ENCODE measurements at regions of chr11 and their contacts with region 1.

Region 1: GRCh38 chr11:128579798-128580504 is 7.4 kb downstream of the ETS1 start:
- DNase-seq: no peak
- H3K4me3 ChIP-seq: no peak overlapping the region
- CTCF ChIP-seq: no peak

Region 2: GRCh38 chr11:128624269-128625175 is 44.6 kb after region 1 on chr11:
- in situ Hi-C with region 1: loop called (anchors 5 kb)
- DNase-seq: no peak
- H3K4me3 ChIP-seq: no peak overlapping the region
- CTCF ChIP-seq: no peak